Aorta (tissue), 5 donors: ENCODE measurements at regions of chr18 and their contacts with region 1.

Region 1: DNA sequence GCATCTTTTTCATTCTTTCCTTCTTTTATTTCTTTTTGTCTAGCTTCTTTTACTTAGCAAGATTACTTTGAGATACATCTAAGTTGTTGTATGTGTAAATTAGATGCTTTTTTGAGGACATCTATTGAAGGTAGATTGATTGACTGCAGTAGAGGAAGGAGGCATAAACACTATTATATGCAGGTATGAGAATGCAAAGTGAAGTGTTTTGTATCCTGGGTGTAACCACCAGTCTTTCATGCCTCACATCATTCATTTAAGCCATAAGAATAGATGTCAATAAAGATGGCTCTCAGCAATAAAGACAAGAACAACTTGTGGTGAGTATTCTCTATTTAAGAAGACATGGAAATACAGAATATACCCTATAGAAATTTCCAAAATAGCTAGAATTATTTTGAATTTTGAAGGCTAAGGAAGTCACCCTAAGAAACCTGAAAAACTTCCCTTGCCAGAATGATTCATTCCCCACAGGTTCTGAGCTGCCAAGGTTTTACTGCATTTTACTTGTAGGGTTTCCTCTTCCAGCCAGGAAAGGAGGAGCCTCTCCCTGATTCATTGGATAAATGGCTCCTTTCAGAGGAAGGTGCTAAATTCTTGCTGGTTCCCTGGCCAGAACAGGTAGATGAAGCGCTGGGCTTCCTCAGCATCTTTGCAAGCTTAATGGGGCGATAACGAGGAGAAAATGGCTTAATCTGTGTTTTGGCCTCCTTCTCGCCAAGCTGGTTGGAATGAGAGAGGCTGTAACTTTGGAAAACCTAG is 279.8 kb upstream of the SLC14A2 start:
- DNase-seq: no peak
- ATAC-seq: no peak
- H3K4me3 ChIP-seq: no peak overlapping the region
- H3K27ac ChIP-seq: no peak overlapping the region
- H3K4me1 ChIP-seq: peaks cover 0 to 5% of the 10 kb centered on the region in 2 donors
- H3K27me3 ChIP-seq: no peaks in the 10 kb centered on the region

Region 2: DNA sequence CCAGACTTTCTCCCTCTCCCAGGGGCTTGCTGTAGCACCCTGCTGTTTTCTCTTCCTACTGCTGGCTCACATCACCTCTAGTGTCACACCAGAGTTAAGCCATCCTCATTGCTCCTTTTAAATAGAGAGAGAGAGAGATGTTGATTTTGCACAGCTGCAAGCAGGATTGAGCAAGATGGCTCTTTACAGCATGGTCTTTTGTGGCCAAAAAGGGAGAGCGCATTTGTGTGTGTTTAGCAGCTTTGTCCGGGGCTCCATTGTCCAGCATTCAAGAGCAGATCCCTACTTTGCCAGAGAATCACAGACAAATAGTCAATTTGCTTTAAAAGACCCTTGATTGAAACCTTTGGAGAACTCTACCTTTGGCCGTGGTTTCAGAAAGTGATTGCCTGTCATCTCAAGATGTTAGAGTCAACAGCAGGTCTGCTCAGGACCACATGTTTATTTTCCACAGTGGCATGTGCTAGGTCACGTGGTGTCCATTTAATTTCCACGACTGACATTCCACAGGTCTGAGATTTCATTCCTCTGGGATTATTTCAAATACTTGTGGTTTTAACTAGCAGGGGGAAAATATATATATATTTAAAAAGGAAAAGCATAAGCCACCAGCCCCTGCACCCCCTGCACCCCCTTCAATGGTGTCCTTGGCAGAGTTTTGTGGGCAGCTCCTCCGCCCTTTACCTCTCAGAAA is 80.1 kb before region 1 on chr18:
- intact Hi-C with region 1: loop called in 1 of 2 experiments (anchors 10 kb)
- DNase-seq: no peak
- ATAC-seq: peak; percentile 47
- H3K4me3 ChIP-seq: no peak overlapping the region
- H3K27ac ChIP-seq: peak overlapping the region in 1 of 2 donors; percentile 88
- H3K4me1 ChIP-seq: peaks cover 4 to 8% of the 10 kb centered on the region in 2 donors
- H3K27me3 ChIP-seq: no peaks in the 10 kb centered on the region